ENCODE measurements at regions of chr7 and their contacts with region 1.

Region 1: GRCh38 chr7:36852017-36852416 is 127.7 kb upstream of the AOAH start:
- DNase-seq: peak; percentile 52
- ATAC-seq: peak; percentile 87
- H3K4me3 Mint-ChIP-seq: no peak overlapping the region
- H3K27ac Mint-ChIP-seq: peak overlapping the region; percentile 82
- H3K4me1 Mint-ChIP-seq: peaks cover 22% of the 10 kb centered on the region
- H3K27me3 Mint-ChIP-seq: no peaks in the 10 kb centered on the region

Region 2: DNA sequence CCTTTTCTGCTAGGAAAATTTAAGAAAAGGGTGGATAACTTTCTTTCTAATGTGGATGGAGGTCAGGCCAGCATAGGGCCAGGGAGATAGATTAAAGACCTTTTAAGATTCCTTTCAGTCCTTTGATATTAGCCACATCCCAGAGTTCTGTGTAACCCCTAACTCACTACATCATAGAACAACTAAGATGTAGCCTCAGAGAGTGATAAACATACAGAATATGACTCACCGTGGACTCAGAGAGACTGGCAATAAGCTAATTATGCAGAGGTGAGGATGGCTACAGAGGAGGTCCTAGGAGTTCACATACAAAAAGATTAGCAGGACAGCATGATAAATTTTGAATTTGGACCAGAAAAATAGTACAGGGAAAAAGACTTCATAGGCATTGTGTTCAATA is 268.7 kb before region 1 on chr7:
- CTCF ChIA-PET with region 1: no interaction called
- POLR2A ChIA-PET with region 1: no interaction called
- intact Hi-C with region 1: loop called in 1 of 2 experiments (anchors 5 kb)
- DNase-seq: no peak
- ATAC-seq: peak; percentile 87
- H3K4me3 Mint-ChIP-seq: no peak overlapping the region
- H3K27ac Mint-ChIP-seq: peak overlapping the region; percentile 79
- H3K4me1 Mint-ChIP-seq: peaks cover 19% of the 10 kb centered on the region
- H3K27me3 Mint-ChIP-seq: no peaks in the 10 kb centered on the region

Region 3: DNA sequence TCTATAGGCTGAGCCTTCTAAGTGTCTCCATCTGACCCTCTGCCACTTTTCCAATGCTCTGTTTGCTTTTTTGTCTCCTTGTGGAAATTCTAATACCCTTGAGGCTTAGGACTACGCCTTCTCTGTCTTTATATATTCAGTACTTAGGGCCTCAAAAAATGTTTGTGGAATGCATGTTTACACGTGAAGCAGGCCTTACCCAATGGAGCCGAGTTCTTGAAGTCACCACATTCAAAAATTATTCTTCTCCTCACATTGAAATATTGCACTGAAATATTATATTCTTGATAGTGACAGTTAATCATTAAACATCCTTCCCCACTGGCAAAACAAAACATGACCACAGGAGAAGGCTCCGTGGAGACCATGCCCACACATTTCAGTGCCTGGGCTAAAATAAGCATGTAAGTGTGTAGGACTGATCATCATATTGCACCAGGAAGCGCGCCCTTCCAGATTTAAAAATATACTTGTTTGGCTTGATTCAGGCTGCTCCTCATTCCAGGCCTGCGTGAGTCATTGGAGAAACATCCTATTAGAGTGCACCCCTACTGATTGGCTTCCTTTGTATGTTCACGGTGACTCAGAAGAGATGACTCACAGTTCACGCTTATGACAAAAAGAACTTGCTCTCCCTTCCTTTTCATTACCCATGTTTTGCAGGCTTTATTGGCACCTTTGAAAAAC is 179.7 kb after region 1 on chr7:
- CTCF ChIA-PET with region 1: no interaction called
- POLR2A ChIA-PET with region 1: no interaction called
- intact Hi-C with region 1: loop called in 1 of 2 experiments (anchors 5 kb)
- DNase-seq: peak; percentile 73
- ATAC-seq: peak; percentile 90
- H3K4me3 Mint-ChIP-seq: no peak overlapping the region
- H3K27ac Mint-ChIP-seq: peak overlapping the region; percentile 52
- H3K4me1 Mint-ChIP-seq: peaks cover 77% of the 10 kb centered on the region
- H3K27me3 Mint-ChIP-seq: no peaks in the 10 kb centered on the region

Measured in activated CD4-positive, alpha-beta T cell treated with anti-CD3 and anti-CD28 coated beads for 36 hours (primary cell).